ENCODE measurements at regions of chr7 and their contacts with region 1.

Region 1: DNA sequence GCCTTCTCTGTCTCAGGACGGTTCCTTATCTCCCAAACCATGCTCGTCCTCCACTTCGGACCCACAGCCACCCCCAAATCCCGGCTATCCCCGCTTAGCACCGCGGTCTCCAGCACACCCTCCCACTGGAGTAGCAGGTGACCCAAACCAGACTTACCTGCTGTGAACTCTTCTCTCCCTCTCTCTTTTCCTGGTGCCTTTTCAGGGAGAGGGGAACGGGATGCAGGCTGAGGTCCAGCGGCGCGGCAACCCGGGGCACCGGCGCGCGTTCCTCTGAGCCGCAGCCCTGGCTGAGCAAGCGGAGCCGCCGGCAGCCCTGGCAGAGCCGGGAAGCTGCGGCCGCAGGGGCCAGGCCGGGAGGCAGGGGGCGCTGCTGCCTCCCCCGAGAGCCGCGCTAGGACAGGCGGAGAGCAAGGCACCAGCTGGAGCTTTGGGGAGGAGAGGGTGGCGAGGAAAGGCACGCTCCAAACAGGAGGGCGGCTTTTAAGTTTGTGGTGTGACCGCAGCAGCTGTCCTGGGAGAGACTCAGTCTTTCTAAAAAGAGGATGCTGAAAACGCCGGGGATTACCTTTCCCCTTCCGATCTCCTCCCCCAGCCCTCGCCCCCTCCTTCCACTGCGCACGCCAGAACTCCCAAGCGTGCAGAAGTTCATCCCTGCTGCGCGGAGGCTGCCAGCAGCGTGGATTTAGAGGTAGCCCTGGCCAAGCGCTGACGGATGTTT is at the start of gene SEMA3D:
- DNase-seq: peak; percentile 9 to 87
- H3K4me3 ChIP-seq: peak within 1 kb of the TSS; percentile 63 to 80
- H3K27ac ChIP-seq: peak within 1 kb of the TSS; percentile 88 to 92
- H3K4me1 ChIP-seq: peaks cover 0 to 3% of the 10 kb centered on the region in 2 donors
- H3K27me3 ChIP-seq: no peaks in the 10 kb centered on the region
- CTCF ChIP-seq: peak; percentile 64 to 87 (median 85)
- total RNA-seq, gene SEMA3D: 4.5 TPM

Region 2: DNA sequence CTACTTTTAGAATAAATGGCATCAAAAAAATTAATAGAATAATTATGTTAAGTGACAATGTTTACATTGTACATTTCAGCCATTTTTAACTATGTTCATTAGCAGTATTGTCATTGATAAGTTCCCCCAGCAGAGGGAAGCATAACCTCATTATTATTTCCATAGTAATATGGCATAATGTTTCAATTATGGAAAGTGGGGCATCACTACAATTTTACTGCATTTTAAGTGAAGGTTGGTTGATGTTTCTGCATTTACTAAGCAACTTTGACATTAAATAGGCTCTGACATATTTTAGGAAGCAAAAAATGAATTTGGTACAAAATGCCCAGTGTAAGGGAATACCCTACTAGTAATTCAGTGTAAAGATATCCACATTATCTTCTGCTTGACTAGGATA is 1210.4 kb before region 1 on chr7:
- intact Hi-C with region 1: loop called (anchors 5 kb)
- DNase-seq: no peak
- H3K4me3 ChIP-seq: no peak overlapping the region
- H3K27ac ChIP-seq: no peak overlapping the region
- H3K4me1 ChIP-seq: no peaks in the 10 kb centered on the region
- H3K27me3 ChIP-seq: no peaks in the 10 kb centered on the region
- CTCF ChIP-seq: peak; percentile 24 to 52 (median 33)

Region 3: GRCh38 chr7:84529480-84530205 is 657.0 kb before region 1 on chr7:
- intact Hi-C with region 1: no loop called
- DNase-seq: no peak
- H3K4me3 ChIP-seq: no peak overlapping the region
- H3K27ac ChIP-seq: no peak overlapping the region
- H3K4me1 ChIP-seq: no peaks in the 10 kb centered on the region
- H3K27me3 ChIP-seq: no peaks in the 10 kb centered on the region
- CTCF ChIP-seq: no peak

Region 4: GRCh38 chr7:84790882-84791281 is 395.8 kb before region 1 on chr7:
- intact Hi-C with region 1: loop called (anchors 10 kb)
- DNase-seq: no peak
- H3K4me3 ChIP-seq: no peak overlapping the region
- H3K27ac ChIP-seq: no peak overlapping the region
- H3K4me1 ChIP-seq: peaks cover 0 to 2% of the 10 kb centered on the region in 2 donors
- H3K27me3 ChIP-seq: no peaks in the 10 kb centered on the region
- CTCF ChIP-seq: no peak

Region 5: GRCh38 chr7:85041605-85042216 is 145.0 kb before region 1 on chr7:
- intact Hi-C with region 1: loop called (anchors 1 kb)
- DNase-seq: peak in 1 of 2 donors; percentile 72
- H3K4me3 ChIP-seq: no peak overlapping the region
- H3K27ac ChIP-seq: no peak overlapping the region
- H3K4me1 ChIP-seq: no peaks in the 10 kb centered on the region
- H3K27me3 ChIP-seq: no peaks in the 10 kb centered on the region
- CTCF ChIP-seq: peak; percentile 38 to 82 (median 70)

Region 6: GRCh38 chr7:85094046-85094725 is 92.5 kb before region 1 on chr7:
- intact Hi-C with region 1: loop called (anchors 2 kb)
- DNase-seq: peak; percentile 10 to 81
- H3K4me3 ChIP-seq: no peak overlapping the region
- H3K27ac ChIP-seq: peak overlapping the region; percentile 76 to 77
- H3K4me1 ChIP-seq: no peaks in the 10 kb centered on the region
- H3K27me3 ChIP-seq: no peaks in the 10 kb centered on the region
- CTCF ChIP-seq: no peak

Region 7: GRCh38 chr7:85172530-85172941 is 14.1 kb before region 1 on chr7:
- intact Hi-C with region 1: loop called (anchors 2 kb)
- DNase-seq: peak; percentile 9 to 81
- H3K4me3 ChIP-seq: peak overlapping the region in 1 of 2 donors; percentile 38
- H3K27ac ChIP-seq: peak overlapping the region; percentile 65 to 77
- H3K4me1 ChIP-seq: peaks cover 0 to 8% of the 10 kb centered on the region in 2 donors
- H3K27me3 ChIP-seq: no peaks in the 10 kb centered on the region
- CTCF ChIP-seq: no peak

Region 8: GRCh38 chr7:85554236-85555178 is 367.8 kb after region 1 on chr7:
- intact Hi-C with region 1: loop called (anchors 5 kb)
- DNase-seq: peak in 1 of 2 donors; percentile 58
- H3K4me3 ChIP-seq: no peak overlapping the region
- H3K27ac ChIP-seq: no peak overlapping the region
- H3K4me1 ChIP-seq: no peaks in the 10 kb centered on the region
- H3K27me3 ChIP-seq: no peaks in the 10 kb centered on the region
- CTCF ChIP-seq: peak; percentile 39 to 71 (median 59)

Measured in ascending aorta (tissue), 2 donors.